PC-9 (cell line): ENCODE measurements at regions of chr15 and their contacts with region 1.

Region 1: GRCh38 chr15:79608066-79608864 is 176.1 kb downstream of the MINAR1 start:
- DNase-seq: no peak
- H3K4me3 ChIP-seq: no peak overlapping the region
- H3K27ac ChIP-seq: no peak overlapping the region
- H3K4me1 ChIP-seq: no peaks in the 10 kb centered on the region
- H3K27me3 ChIP-seq: peaks cover 84% of the 10 kb centered on the region
- CTCF ChIP-seq: no peak

Region 2: GRCh38 chr15:79657731-79658130 is 49.5 kb after region 1 on chr15:
- CTCF ChIA-PET with region 1: no interaction called
- POLR2A ChIA-PET with region 1: interaction called, 11 read pairs
- intact Hi-C with region 1: no loop called
- DNase-seq: no peak
- H3K4me3 ChIP-seq: no peak overlapping the region
- H3K27ac ChIP-seq: no peak overlapping the region
- H3K4me1 ChIP-seq: no peaks in the 10 kb centered on the region
- H3K27me3 ChIP-seq: peaks cover 23% of the 10 kb centered on the region; the same call in 1 of the 2 replicates
- CTCF ChIP-seq: no peak